ENCODE measurements at regions of chr17 and their contacts with region 1.

Region 1: GRCh38 chr17:75319904-75320691 is 30.9 kb upstream of the SLC25A19 start:
- DNase-seq: peak; percentile 76
- ATAC-seq: peak; percentile 42; the same call in 1 of the 2 replicates
- H3K4me3 ChIP-seq: no peak overlapping the region
- H3K27ac ChIP-seq: no peak overlapping the region
- H3K4me1 ChIP-seq: peaks cover 7% of the 10 kb centered on the region; the same call in 1 of the 2 replicates
- H3K27me3 ChIP-seq: no peaks in the 10 kb centered on the region
- CTCF ChIP-seq: no peak
- POLR2A ChIP-seq: no peak
- RAD21 ChIP-seq: no peak

Region 2: GRCh38 chr17:75131280-75132017 is 188.6 kb before region 1 on chr17 and contains the start of gene NT5C:
- CTCF ChIA-PET with region 1: no interaction called
- POLR2A ChIA-PET with region 1: no interaction called
- dilution Hi-C with region 1: no loop called
- in situ Hi-C with region 1: no loop called
- intact Hi-C with region 1: no loop called
- DNase-seq: peak; percentile 61
- ATAC-seq: peak; percentile 89
- H3K4me3 ChIP-seq: peak within 1 kb of the TSS; percentile 91
- H3K27ac ChIP-seq: peak within 1 kb of the TSS; percentile 87
- H3K4me1 ChIP-seq: no peaks in the 10 kb centered on the region; the same call in 1 of the 2 replicates
- H3K27me3 ChIP-seq: no peaks in the 10 kb centered on the region
- CTCF ChIP-seq: peak; percentile 62
- POLR2A ChIP-seq: peak; percentile 54; the same call in 1 of the 2 replicates
- RAD21 ChIP-seq: peak; percentile 41
- total RNA-seq, gene NT5C: 23.1 and 24.0 TPM in 2 replicates

Region 3: GRCh38 chr17:75338335-75338734 is 18.2 kb after region 1 on chr17:
- CTCF ChIA-PET with region 1: interaction called, 3 read pairs
- POLR2A ChIA-PET with region 1: interaction called, 17 read pairs
- dilution Hi-C with region 1: no loop called
- in situ Hi-C with region 1: no loop called
- intact Hi-C with region 1: no loop called
- DNase-seq: peak; percentile 65
- ATAC-seq: peak; percentile 83
- H3K4me3 ChIP-seq: no peak overlapping the region
- H3K27ac ChIP-seq: peak overlapping the region; percentile 20; the same call in 1 of the 2 replicates
- H3K4me1 ChIP-seq: no peaks in the 10 kb centered on the region; the same call in 1 of the 2 replicates
- H3K27me3 ChIP-seq: no peaks in the 10 kb centered on the region
- CTCF ChIP-seq: no peak
- POLR2A ChIP-seq: no peak
- RAD21 ChIP-seq: no peak

Region 4: GRCh38 chr17:75393523-75394331 is 73.6 kb after region 1 on chr17:
- CTCF ChIA-PET with region 1: interaction called, 4 read pairs
- POLR2A ChIA-PET with region 1: no interaction called
- dilution Hi-C with region 1: no loop called
- in situ Hi-C with region 1: no loop called
- intact Hi-C with region 1: loop called (anchors 1 kb)
- DNase-seq: peak; percentile 98
- ATAC-seq: peak; percentile 98
- H3K4me3 ChIP-seq: peak overlapping the region; percentile 77
- H3K27ac ChIP-seq: peak overlapping the region; percentile 91
- H3K4me1 ChIP-seq: no peaks in the 10 kb centered on the region; the same call in 1 of the 2 replicates
- H3K27me3 ChIP-seq: no peaks in the 10 kb centered on the region
- CTCF ChIP-seq: no peak
- POLR2A ChIP-seq: peak; percentile 50
- RAD21 ChIP-seq: no peak; the same call in 1 of the 2 replicates

Region 5: GRCh38 chr17:75412455-75413317 is 92.6 kb after region 1 on chr17:
- CTCF ChIA-PET with region 1: interaction called, 4 read pairs
- POLR2A ChIA-PET with region 1: no interaction called
- dilution Hi-C with region 1: no loop called
- in situ Hi-C with region 1: loop called (anchors 5 kb)
- intact Hi-C with region 1: loop called (anchors 2 kb)
- DNase-seq: peak; percentile 62
- ATAC-seq: peak; percentile 92
- H3K4me3 ChIP-seq: peak overlapping the region; percentile 22; the same call in 1 of the 2 replicates
- H3K27ac ChIP-seq: no peak overlapping the region
- H3K4me1 ChIP-seq: no peaks in the 10 kb centered on the region
- H3K27me3 ChIP-seq: peaks cover 5% of the 10 kb centered on the region
- CTCF ChIP-seq: peak; percentile 85
- POLR2A ChIP-seq: no peak
- RAD21 ChIP-seq: peak; percentile 86

Measured in IMR-90 (cell line).